Gastrocnemius medialis (tissue), 4 donors: ENCODE measurements at regions of chr1 and their contacts with region 1.

Region 1: GRCh38 chr1:206725109-206725963 is 40.6 kb downstream of the MAPKAPK2 start:
- DNase-seq: no peak
- ATAC-seq: no peak
- H3K4me3 ChIP-seq: no peak overlapping the region
- H3K27ac ChIP-seq: peak overlapping the region; percentile 81 to 95 (median 92)
- H3K4me1 ChIP-seq: peaks cover 69 to 75% of the 10 kb centered on the region in 2 donors
- H3K27me3 ChIP-seq: no peaks in the 10 kb centered on the region
- CTCF ChIP-seq: peak in 3 of 5 experiments; percentile 21 to 42 (median 42)
- POLR2A ChIP-seq: no peak

Region 2: GRCh38 chr1:206658264-206658980 is 66.9 kb before region 1 on chr1:
- in situ Hi-C with region 1: no loop called
- intact Hi-C with region 1: loop called (anchors 1 kb)
- DNase-seq: peak; percentile 43 to 82
- ATAC-seq: peak; percentile 46 to 77
- H3K4me3 ChIP-seq: peak overlapping the region; percentile 42 to 53 (median 44)
- H3K27ac ChIP-seq: peak overlapping the region; percentile 90 to 97 (median 94)
- H3K4me1 ChIP-seq: peaks cover 28 to 56% of the 10 kb centered on the region in 2 donors
- H3K27me3 ChIP-seq: no peaks in the 10 kb centered on the region
- CTCF ChIP-seq: peak; percentile 91 to 96 (median 95)
- POLR2A ChIP-seq: no peak

Region 3: GRCh38 chr1:206693029-206693428 is 32.3 kb before region 1 on chr1:
- in situ Hi-C with region 1: no loop called
- intact Hi-C with region 1: loop called (anchors 2 kb)
- DNase-seq: peak; percentile 81 to 93
- ATAC-seq: peak; percentile 60 to 67
- H3K4me3 ChIP-seq: peak overlapping the region; percentile 34 to 55 (median 37)
- H3K27ac ChIP-seq: peak overlapping the region; percentile 93 to 98 (median 96)
- H3K4me1 ChIP-seq: peaks cover 100% of the 10 kb centered on the region in 2 donors
- H3K27me3 ChIP-seq: no peaks in the 10 kb centered on the region
- CTCF ChIP-seq: no peak
- POLR2A ChIP-seq: peak; percentile 57 to 60

Region 4: DNA sequence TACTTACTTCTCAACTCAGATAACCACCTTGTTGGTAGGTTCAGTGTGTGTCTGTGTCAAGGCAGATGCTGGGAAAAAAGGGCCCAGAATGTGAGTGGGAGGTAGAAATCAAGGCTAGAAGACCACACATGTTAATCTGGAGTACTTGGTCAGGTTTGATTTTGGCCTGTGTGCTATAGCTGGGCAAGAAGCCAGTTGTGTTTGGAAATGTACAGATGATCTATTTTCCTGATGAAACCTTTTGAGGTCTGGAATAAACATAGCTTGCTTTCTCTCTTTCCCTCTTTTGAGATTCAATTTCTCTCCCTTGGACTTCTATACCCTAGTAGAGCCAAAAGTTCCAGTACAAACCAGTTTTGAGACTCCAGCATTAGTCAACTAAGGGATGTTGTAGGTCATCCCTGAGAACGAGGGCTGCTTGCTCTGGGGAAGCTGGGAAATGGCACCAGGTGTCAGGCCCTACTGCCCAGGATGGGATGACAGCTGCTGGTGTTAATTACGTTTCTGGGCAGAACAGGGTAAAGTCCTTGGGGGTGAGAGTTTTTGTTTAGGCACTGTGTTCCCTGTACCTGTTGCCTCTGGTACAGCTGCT is 24.8 kb before region 1 on chr1:
- in situ Hi-C with region 1: no loop called
- intact Hi-C with region 1: loop called (anchors 2 kb)
- DNase-seq: peak; percentile 72 to 81
- ATAC-seq: peak; percentile 60 to 69
- H3K4me3 ChIP-seq: peak overlapping the region in 1 of 4 donors; percentile 10
- H3K27ac ChIP-seq: peak overlapping the region; percentile 93 to 98 (median 96)
- H3K4me1 ChIP-seq: peaks cover 98 to 100% of the 10 kb centered on the region in 2 donors
- H3K27me3 ChIP-seq: no peaks in the 10 kb centered on the region
- CTCF ChIP-seq: no peak
- POLR2A ChIP-seq: peak in 1 of 2 donors; percentile 36

Region 5: GRCh38 chr1:206890690-206891089 is 165.4 kb after region 1 on chr1:
- in situ Hi-C with region 1: no loop called
- intact Hi-C with region 1: loop called (anchors 5 kb)
- DNase-seq: no peak
- ATAC-seq: peak in 1 of 2 donors; percentile 34
- H3K4me3 ChIP-seq: peak overlapping the region in 1 of 4 donors; percentile 27
- H3K27ac ChIP-seq: no peak overlapping the region
- H3K4me1 ChIP-seq: peaks cover 17 to 25% of the 10 kb centered on the region in 2 donors
- H3K27me3 ChIP-seq: no peaks in the 10 kb centered on the region
- CTCF ChIP-seq: no peak
- POLR2A ChIP-seq: no peak